ENCODE measurements at regions of chr14 and their contacts with region 1.

Region 1: DNA sequence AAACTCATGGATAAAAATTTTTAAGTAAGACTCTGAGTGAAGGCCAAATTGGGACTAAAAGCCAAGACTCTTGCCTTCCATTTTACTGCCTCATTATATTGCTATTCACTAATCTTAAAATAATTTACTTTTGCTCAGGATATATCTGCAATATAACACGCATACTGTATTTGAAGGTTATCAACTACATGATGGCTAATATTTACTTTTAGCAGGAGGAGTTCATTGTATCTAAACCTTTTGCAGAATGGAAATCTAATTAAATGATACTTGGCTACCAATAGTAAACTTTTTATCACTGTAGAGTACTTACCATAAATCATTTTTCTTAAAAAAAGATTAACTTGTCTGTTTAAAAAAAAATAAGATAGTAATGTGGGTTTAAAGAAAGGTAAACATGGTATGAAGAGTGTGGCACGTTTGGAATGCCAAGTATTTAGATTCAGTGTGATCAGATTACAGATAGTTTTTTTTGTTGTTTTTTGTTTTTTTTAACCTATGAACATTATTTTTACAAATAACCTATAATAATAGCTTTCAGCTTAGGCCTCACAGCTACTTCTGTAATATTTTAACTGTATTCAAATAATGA is 25.7 kb downstream of the KTN1 start:
- DNase-seq: peak; percentile 46
- H3K4me3 ChIP-seq: no peak overlapping the region
- H3K27ac ChIP-seq: peak overlapping the region; percentile 13
- H3K4me1 ChIP-seq: peaks cover 49% of the 10 kb centered on the region
- H3K27me3 ChIP-seq: no peaks in the 10 kb centered on the region
- CTCF ChIP-seq: no peak
- POLR2A ChIP-seq: no peak

Region 2: GRCh38 chr14:55201224-55202050 is 404.3 kb before region 1 on chr14:
- CTCF ChIA-PET with region 1: no interaction called
- POLR2A ChIA-PET with region 1: no interaction called
- dilution Hi-C with region 1: no loop called
- intact Hi-C with region 1: no loop called
- DNase-seq: no peak
- H3K4me3 ChIP-seq: no peak overlapping the region
- H3K27ac ChIP-seq: no peak overlapping the region
- H3K4me1 ChIP-seq: no peaks in the 10 kb centered on the region
- H3K27me3 ChIP-seq: no peaks in the 10 kb centered on the region
- CTCF ChIP-seq: no peak
- POLR2A ChIP-seq: no peak

Region 3: GRCh38 chr14:55339770-55340169 is 265.9 kb before region 1 on chr14:
- CTCF ChIA-PET with region 1: no interaction called
- POLR2A ChIA-PET with region 1: no interaction called
- dilution Hi-C with region 1: no loop called
- intact Hi-C with region 1: no loop called
- DNase-seq: no peak
- H3K4me3 ChIP-seq: no peak overlapping the region
- H3K27ac ChIP-seq: no peak overlapping the region
- H3K4me1 ChIP-seq: no peaks in the 10 kb centered on the region
- H3K27me3 ChIP-seq: no peaks in the 10 kb centered on the region
- CTCF ChIP-seq: no peak
- POLR2A ChIP-seq: no peak

Region 4: DNA sequence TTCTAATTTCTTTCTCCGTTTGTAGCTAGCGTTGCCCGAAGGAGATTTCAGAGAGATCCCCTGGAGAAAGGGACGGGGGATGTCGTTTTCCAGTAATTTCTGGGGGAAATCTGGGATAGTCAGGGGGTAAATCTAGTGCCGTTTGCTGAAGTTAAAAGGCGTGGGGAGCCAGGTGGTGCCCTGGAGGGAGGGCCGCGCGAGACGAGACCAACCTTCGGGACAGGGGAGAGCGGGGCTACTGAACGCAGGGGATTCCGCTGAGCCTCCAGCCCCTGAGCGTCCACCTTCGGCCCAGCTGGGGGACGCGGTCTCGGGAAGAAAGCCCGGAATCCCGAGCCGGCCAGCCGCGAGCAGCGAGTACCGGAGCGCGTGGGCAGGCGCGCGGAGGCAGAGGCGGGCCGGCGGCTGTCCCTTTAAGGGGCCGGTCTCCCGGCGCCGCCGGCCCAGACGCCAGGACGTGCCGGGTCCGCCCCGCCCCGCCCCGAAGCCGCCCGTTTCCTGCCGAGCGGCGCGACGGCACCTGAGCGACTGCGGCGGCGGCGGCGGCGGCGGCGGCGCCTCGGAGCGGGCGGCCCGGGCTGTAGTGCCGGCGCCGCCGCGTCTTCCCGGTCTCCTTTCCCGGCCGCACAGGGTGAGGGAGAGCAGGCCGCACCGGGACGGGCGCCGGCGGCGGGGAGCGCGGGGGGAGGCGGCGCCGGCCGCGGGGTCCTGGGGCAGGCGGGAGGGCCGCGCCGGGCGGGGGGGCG is 25.8 kb before region 1 on chr14 and contains the start of gene KTN1:
- CTCF ChIA-PET with region 1: interaction called, 5 read pairs
- POLR2A ChIA-PET with region 1: no interaction called
- dilution Hi-C with region 1: no loop called
- intact Hi-C with region 1: loop called (anchors 2 kb)
- DNase-seq: peak; percentile 76
- H3K4me3 ChIP-seq: peak within 1 kb of the TSS; percentile 62 to 87 (median 73)
- H3K27ac ChIP-seq: peak within 1 kb of the TSS; percentile 70
- H3K4me1 ChIP-seq: peaks cover 8% of the 10 kb centered on the region
- H3K27me3 ChIP-seq: no peaks in the 10 kb centered on the region
- CTCF ChIP-seq: no peak
- POLR2A ChIP-seq: peak; percentile 67
- total RNA-seq, gene KTN1: 135 and 148 TPM in 2 replicates

Measured in endothelial cell of umbilical vein (primary cell).